Activated CD4-positive, alpha-beta T cell treated with anti-CD3 and anti-CD28 coated beads for 36 hours (primary cell): ENCODE measurements at regions of chr16 and their contacts with region 1.

Region 1: GRCh38 chr16:55471448-55472097 is 7.4 kb upstream of the MMP2 start:
- DNase-seq: peak; percentile 58
- ATAC-seq: peak; percentile 99
- H3K4me3 Mint-ChIP-seq: no peak overlapping the region
- H3K27ac Mint-ChIP-seq: peak overlapping the region; percentile 62
- H3K4me1 Mint-ChIP-seq: peaks cover 18% of the 10 kb centered on the region
- H3K27me3 Mint-ChIP-seq: peaks cover 18% of the 10 kb centered on the region

Region 2: DNA sequence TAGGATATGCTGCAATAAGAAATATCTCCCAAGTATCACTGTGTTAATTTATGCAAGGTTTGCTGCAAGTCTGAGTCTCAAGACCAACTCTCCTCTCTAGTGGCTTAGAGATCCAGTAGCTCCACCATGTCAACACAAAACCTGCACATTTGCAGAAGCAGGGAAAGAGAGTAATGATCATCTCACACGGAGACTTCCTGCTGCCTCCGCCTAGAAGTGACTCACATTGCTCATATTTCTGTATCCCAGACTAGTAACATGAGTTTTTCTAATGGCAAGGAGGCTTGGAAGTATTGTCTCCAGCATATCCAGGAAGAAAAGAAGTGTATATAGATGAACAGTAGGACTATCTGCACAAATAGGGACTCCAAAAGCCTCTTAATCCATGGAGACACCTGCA is 162.6 kb before region 1 on chr16:
- CTCF ChIA-PET with region 1: no interaction called
- POLR2A ChIA-PET with region 1: no interaction called
- intact Hi-C with region 1: no loop called
- DNase-seq: no peak
- ATAC-seq: no peak
- H3K4me3 Mint-ChIP-seq: no peak overlapping the region
- H3K27ac Mint-ChIP-seq: no peak overlapping the region
- H3K4me1 Mint-ChIP-seq: no peaks in the 10 kb centered on the region
- H3K27me3 Mint-ChIP-seq: peaks cover 11% of the 10 kb centered on the region

Region 3: DNA sequence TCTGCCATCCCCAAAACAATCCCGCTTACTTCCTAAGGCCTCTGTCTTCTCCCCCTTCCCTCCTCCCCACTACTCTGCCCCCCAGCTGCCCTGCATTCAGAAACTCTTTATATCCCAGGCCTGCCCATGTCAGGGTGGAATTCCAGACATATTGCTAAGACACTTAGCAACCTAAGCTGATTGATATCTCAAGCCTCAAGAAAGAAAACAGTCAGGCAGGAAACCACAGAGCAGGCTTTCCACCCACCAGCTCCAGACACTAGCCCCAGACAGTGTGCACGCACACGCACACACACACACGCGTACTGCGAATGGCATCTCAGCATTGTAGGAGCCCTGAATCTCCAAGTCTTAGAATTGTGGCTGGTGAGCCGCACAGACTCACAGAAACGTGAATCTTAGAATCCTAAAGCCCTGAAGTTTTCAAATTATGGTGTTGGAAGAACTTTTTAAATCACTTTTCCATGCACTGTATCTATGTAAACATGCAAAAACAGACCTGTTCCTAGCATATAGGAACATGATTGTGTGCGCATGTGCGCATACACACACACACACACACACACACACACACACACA is 28.5 kb after region 1 on chr16:
- CTCF ChIA-PET with region 1: interaction called, 4 read pairs
- POLR2A ChIA-PET with region 1: no interaction called
- intact Hi-C with region 1: loop called in 1 of 2 experiments (anchors 1 kb)
- DNase-seq: peak; percentile 70
- ATAC-seq: peak; percentile 95
- H3K4me3 Mint-ChIP-seq: no peak overlapping the region
- H3K27ac Mint-ChIP-seq: no peak overlapping the region
- H3K4me1 Mint-ChIP-seq: peaks cover 17% of the 10 kb centered on the region
- H3K27me3 Mint-ChIP-seq: no peaks in the 10 kb centered on the region

Region 4: DNA sequence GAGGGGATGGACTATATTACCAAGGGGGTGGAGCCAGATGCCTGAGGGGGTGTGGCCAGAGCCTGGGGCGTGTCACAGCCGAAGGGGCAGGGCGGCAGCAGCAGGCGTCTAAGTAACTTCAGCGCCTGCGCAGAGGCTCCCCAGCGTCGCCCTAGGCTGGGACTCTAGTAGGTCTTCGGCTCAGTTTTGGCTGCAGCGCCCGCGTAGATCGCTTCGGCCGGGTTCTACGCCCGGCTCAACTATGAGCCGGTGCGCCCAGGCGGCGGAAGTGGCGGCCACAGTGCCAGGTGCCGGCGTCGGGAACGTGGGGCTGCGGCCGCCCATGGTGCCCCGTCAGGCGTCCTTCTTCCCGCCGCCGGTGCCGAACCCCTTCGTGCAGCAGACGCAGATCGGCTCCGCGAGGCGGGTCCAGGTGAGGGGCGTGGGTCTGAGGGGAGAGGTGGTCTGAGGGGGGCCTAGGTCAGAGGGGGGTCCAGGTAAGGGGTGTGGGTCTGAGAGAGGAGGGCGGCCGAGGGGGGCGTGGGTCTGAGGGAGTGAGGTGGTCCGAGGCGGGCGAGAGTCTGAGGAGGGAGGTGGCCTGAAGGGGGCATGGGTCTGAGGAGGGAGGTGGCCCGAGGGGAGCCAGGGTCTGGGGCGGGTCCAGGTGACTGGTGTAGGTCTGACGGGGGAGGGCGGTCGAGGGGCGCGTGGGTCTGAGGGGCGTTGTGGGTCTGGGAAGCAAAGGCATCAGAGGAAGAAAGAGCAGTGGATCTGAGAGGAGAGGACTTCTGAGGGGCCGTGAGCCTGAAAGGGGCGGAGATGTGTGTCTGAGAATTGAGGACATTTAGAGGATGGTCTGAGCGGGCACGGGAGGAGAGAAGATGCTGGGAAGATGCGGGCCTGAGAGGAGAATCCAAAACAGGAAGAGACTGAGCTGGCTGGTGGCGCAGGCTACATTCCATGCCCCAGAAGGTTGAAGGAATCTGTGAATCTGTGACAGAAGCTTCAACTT is 37.7 kb after region 1 on chr16 and contains the start of gene LPCAT2:
- CTCF ChIA-PET with region 1: no interaction called
- POLR2A ChIA-PET with region 1: no interaction called
- intact Hi-C with region 1: loop called in 1 of 2 experiments (anchors 2 kb)
- DNase-seq: peak; percentile 82
- ATAC-seq: peak; percentile 99
- H3K4me3 Mint-ChIP-seq: peak within 1 kb of the TSS; percentile 43
- H3K27ac Mint-ChIP-seq: no peak within 1 kb of the TSS
- H3K4me1 Mint-ChIP-seq: peaks cover 9% of the 10 kb centered on the region
- H3K27me3 Mint-ChIP-seq: peaks cover 31% of the 10 kb centered on the region
- total RNA-seq, gene LPCAT2: 0.37 to 0.59 TPM

Region 5: DNA sequence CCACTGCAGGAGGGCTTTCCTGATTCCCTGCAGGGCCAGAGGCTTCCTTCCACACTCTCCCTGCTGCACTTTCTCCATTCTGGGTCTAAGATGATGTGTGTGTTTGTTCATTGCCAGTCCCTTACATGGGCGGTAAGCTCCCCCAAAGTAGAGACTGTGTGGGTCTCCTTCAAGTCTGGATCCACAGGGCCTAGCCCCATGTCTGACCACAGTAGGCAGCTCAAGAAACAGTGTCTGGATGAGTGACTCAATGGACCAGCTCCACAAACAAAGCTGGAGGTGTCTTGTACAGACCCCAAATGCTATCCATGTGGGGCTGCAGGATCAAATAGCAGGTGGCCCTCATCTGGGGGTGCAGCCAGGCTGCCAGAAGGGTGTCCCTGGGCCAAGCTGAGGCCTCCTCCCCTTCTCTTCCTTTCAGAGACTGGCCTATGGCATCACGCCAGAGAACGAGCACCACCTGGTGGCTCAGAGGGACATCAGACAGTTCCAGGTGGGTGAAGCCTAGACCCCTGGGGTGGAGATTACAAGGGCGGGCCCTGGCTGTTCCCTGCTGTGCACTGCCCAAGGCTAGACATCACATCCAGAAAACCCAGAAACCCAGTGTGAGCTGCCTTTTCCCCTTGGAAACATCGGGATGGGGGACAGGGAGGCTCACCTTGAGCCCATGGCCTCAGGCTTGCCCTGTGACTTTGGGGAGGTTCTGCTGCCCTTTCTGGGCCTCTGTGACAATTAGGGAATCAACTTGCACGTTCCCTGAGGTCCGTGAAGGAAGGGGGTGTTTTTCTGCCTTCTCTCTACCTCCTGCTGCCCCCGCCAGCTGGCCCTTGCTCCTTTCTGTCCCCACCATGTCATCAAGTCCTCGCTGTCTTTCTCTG is 230.1 kb after region 1 on chr16:
- CTCF ChIA-PET with region 1: interaction called, 112 read pairs
- POLR2A ChIA-PET with region 1: no interaction called
- intact Hi-C with region 1: no loop called
- DNase-seq: peak; percentile 75
- ATAC-seq: peak; percentile 66
- H3K4me3 Mint-ChIP-seq: no peak overlapping the region
- H3K27ac Mint-ChIP-seq: no peak overlapping the region
- H3K4me1 Mint-ChIP-seq: peaks cover 2% of the 10 kb centered on the region
- H3K27me3 Mint-ChIP-seq: peaks cover 4% of the 10 kb centered on the region

Region 6: DNA sequence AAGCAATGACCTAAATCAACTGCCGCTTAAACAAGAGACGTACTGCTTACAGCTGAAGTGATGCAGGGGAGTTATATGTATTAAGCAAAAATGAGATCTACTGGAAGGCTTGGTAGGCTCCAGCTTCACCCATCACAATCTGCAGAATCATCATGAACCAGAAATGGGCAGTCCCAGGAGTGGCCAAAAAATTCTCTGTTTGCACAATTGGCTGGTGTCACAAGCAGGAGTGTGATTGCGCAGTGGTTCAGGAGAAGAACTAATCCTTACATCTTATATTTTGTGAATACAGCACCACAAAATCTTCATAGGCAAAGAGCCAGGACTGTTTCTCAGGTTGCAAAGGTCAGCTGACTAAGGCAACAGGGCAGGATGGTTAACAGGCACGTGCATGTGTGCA is 285.4 kb after region 1 on chr16:
- CTCF ChIA-PET with region 1: interaction called, 3 read pairs
- POLR2A ChIA-PET with region 1: no interaction called
- intact Hi-C with region 1: loop called in 1 of 2 experiments (anchors 2 kb)
- DNase-seq: no peak
- ATAC-seq: no peak
- H3K4me3 Mint-ChIP-seq: no peak overlapping the region
- H3K27ac Mint-ChIP-seq: no peak overlapping the region
- H3K4me1 Mint-ChIP-seq: peaks cover 21% of the 10 kb centered on the region
- H3K27me3 Mint-ChIP-seq: peaks cover 10% of the 10 kb centered on the region

Region 7: DNA sequence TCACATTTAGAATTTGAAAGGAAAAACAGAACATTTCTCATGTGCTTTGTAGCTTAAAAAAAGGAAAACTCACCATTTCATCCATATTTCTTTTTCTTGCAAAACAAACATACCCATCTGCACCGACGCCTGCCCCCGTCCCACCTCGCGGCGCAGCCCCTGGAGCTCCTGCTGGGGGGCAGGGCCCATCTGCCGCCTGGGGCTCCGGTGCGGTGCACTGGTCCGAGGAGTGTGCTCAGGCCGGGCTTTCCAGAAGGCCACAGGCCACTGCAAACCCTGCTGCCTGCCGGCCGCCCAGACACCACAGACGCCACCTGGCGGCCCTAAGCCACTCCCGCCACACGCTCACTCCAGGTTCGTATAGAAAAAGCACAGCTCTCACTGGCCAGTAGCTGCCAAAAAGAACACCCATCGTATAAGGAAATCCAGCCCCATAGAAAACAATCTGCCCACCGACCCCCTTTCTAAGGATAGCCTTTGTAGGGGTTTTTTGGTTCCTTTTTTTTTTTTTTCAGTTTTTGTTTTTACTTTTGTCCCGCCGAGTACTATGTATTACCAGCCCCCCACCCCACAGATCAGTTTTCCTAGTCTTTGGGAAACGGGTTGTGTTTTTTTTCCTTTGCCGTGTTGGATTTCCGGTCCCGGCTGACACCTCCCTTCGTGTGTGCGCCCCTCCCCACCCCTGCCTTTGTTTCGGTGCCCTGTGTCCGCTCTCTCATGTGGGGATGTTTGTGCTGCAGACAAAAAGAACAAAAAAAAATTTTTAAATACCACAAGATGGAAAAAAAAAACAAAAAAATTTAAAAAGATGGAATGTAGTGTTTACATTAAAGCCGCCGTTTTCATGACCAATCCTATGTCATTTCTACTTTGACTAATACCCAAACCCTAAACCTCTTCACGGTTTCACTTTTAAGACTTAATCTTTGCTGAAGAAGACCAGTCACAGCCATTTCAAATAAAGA is 885.0 kb after region 1 on chr16:
- CTCF ChIA-PET with region 1: interaction called, 3 read pairs
- POLR2A ChIA-PET with region 1: no interaction called
- intact Hi-C with region 1: loop called in 1 of 2 experiments (anchors 5 kb)
- DNase-seq: peak; percentile 77
- ATAC-seq: peak; percentile 84
- H3K4me3 Mint-ChIP-seq: peak overlapping the region; percentile 78
- H3K27ac Mint-ChIP-seq: peak overlapping the region; percentile 98
- H3K4me1 Mint-ChIP-seq: peaks cover 29% of the 10 kb centered on the region
- H3K27me3 Mint-ChIP-seq: no peaks in the 10 kb centered on the region